ENCODE measurements at regions of chr19 and their contacts with region 1.

Region 1: GRCh38 chr19:41353466-41354342 is at the start of gene TGFB1:
- DNase-seq: peak; percentile 96
- ATAC-seq: peak; percentile 45
- H3K4me3 Mint-ChIP-seq: peak within 1 kb of the TSS; percentile 96
- H3K27ac Mint-ChIP-seq: peak within 1 kb of the TSS; percentile 97
- H3K4me1 Mint-ChIP-seq: peaks cover 58% of the 10 kb centered on the region
- H3K27me3 Mint-ChIP-seq: no peaks in the 10 kb centered on the region
- total RNA-seq, gene TGFB1: 86.2 to 99.0 TPM

Region 2: DNA sequence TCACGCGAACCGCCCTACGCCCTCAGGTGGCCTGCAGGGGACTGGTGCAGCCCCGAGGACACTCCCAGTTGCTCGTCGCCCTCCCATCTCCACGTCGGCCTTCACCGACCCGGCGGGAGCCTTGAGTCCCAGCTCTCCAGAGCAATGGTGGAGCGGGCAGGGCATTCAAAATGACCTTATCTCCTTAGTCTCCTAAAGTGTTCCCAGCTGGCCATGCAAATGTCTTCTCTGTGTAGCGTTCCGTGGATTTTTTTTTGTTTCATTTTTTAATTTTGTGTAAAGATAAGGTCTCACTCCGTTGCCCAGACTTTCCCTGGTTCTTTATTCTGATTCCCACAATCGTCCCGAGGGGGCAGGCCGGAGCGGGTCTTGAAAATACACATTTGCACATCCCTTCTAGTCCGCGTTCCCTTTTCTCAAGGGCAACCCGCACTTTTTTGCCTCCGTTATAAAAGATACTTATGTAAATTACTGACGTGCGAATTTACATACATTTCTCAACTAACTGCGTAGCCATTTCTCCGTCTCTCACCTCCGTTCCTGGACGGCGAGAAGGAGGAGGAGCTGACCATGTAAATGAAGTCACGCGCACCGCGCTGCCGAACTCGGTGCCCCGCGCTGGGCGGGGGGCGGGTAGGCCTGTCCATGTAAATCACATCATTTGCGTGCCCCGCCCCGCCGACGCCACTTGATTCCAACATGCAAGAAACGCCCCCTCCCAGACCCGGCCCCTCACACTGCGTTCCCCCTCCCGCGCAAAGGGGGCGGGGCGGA is 555.3 kb before region 1 on chr19:
- CTCF ChIA-PET with region 1: no interaction called
- POLR2A ChIA-PET with region 1: no interaction called
- intact Hi-C with region 1: loop called in 1 of 2 experiments (anchors 2 kb)
- DNase-seq: peak; percentile 100
- ATAC-seq: peak; percentile 82
- H3K4me3 Mint-ChIP-seq: peak overlapping the region; percentile 91
- H3K27ac Mint-ChIP-seq: peak overlapping the region; percentile 97
- H3K4me1 Mint-ChIP-seq: peaks cover 49% of the 10 kb centered on the region
- H3K27me3 Mint-ChIP-seq: no peaks in the 10 kb centered on the region

Region 3: DNA sequence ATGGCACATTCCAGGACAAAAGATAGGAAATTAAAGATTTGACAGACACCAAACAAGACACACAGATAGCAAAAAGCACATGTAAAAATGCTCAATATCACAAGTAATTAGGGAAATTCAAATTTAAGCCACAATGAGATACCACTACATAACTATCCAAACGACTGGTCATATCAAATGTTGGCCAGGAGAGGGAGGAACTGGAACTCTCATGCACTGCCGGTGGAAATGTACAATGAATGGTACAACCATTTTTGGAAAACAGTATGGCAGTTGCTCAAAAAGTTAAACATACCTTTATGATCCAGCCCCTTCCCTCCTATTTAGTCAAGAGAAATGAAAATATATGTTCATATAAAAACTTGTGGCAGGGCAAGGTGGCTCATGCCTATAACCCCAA is 197.5 kb before region 1 on chr19:
- CTCF ChIA-PET with region 1: no interaction called
- POLR2A ChIA-PET with region 1: no interaction called
- intact Hi-C with region 1: no loop called
- DNase-seq: no peak
- ATAC-seq: no peak
- H3K4me3 Mint-ChIP-seq: no peak overlapping the region
- H3K27ac Mint-ChIP-seq: no peak overlapping the region
- H3K4me1 Mint-ChIP-seq: no peaks in the 10 kb centered on the region
- H3K27me3 Mint-ChIP-seq: no peaks in the 10 kb centered on the region

Region 4: DNA sequence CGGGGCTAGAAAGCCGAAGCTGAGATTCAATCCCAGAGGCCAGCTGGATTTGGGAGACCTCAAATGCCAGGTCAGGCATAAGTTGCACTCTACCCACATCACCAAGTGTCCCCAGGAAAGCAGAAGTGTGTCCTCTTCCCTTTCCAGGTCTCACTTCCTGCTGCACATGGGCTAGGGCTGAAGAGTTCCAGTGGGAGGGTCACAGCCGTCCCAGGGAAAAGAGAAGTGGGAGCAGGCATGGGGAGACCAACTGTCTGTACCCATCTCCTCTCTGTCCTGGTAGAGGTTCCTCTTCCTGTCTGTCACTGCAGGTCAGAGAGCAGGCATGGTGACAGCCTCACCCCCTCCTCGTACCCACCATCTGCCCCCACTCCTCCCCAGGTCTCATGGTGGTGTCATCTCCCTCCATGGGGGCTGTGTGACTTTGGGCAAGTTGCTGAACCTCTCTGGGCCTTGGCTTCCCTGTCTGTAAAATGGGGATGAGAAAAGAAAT is 119.9 kb before region 1 on chr19:
- CTCF ChIA-PET with region 1: no interaction called
- POLR2A ChIA-PET with region 1: no interaction called
- intact Hi-C with region 1: no loop called
- DNase-seq: no peak
- ATAC-seq: no peak
- H3K4me3 Mint-ChIP-seq: no peak overlapping the region
- H3K27ac Mint-ChIP-seq: no peak overlapping the region
- H3K4me1 Mint-ChIP-seq: no peaks in the 10 kb centered on the region
- H3K27me3 Mint-ChIP-seq: no peaks in the 10 kb centered on the region

Region 5: GRCh38 chr19:41327576-41328156 is 26.0 kb before region 1 on chr19:
- CTCF ChIA-PET with region 1: interaction called, 3 read pairs
- POLR2A ChIA-PET with region 1: interaction called, 17 read pairs
- intact Hi-C with region 1: loop called (anchors 1 kb)
- DNase-seq: peak; percentile 93
- ATAC-seq: peak; percentile 75
- H3K4me3 Mint-ChIP-seq: peak overlapping the region; percentile 63
- H3K27ac Mint-ChIP-seq: peak overlapping the region; percentile 96
- H3K4me1 Mint-ChIP-seq: peaks cover 55% of the 10 kb centered on the region
- H3K27me3 Mint-ChIP-seq: no peaks in the 10 kb centered on the region

Region 6: GRCh38 chr19:41341669-41342490 is 11.8 kb before region 1 on chr19:
- CTCF ChIA-PET with region 1: no interaction called
- POLR2A ChIA-PET with region 1: no interaction called
- intact Hi-C with region 1: no loop called
- DNase-seq: no peak
- ATAC-seq: no peak
- H3K4me3 Mint-ChIP-seq: no peak overlapping the region
- H3K27ac Mint-ChIP-seq: no peak overlapping the region
- H3K4me1 Mint-ChIP-seq: peaks cover 30% of the 10 kb centered on the region
- H3K27me3 Mint-ChIP-seq: no peaks in the 10 kb centered on the region

Region 7: GRCh38 chr19:41397086-41398049 is 43.7 kb after region 1 on chr19 and contains the starts of genes BCKDHA and EXOSC5:
- CTCF ChIA-PET with region 1: no interaction called
- POLR2A ChIA-PET with region 1: no interaction called
- intact Hi-C with region 1: loop called in 1 of 2 experiments (anchors 1 kb)
- DNase-seq: peak; percentile 99
- ATAC-seq: peak; percentile 100
- H3K4me3 Mint-ChIP-seq: peak within 1 kb of the TSS; percentile 97
- H3K27ac Mint-ChIP-seq: peak within 1 kb of the TSS; percentile 97
- H3K4me1 Mint-ChIP-seq: peaks cover 31% of the 10 kb centered on the region
- H3K27me3 Mint-ChIP-seq: no peaks in the 10 kb centered on the region
- total RNA-seq, gene BCKDHA: 14.5 to 25.4 TPM
- total RNA-seq, gene EXOSC5: 32.7 to 47.8 TPM

Region 8: GRCh38 chr19:41548954-41549688 is 195.4 kb after region 1 on chr19:
- CTCF ChIA-PET with region 1: no interaction called
- POLR2A ChIA-PET with region 1: interaction called, 6 read pairs
- intact Hi-C with region 1: loop called (anchors 2 to 5 kb)
- DNase-seq: peak; percentile 89
- ATAC-seq: peak; percentile 76
- H3K4me3 Mint-ChIP-seq: peak overlapping the region; percentile 90
- H3K27ac Mint-ChIP-seq: peak overlapping the region; percentile 99
- H3K4me1 Mint-ChIP-seq: peaks cover 69% of the 10 kb centered on the region
- H3K27me3 Mint-ChIP-seq: no peaks in the 10 kb centered on the region

Region 9: DNA sequence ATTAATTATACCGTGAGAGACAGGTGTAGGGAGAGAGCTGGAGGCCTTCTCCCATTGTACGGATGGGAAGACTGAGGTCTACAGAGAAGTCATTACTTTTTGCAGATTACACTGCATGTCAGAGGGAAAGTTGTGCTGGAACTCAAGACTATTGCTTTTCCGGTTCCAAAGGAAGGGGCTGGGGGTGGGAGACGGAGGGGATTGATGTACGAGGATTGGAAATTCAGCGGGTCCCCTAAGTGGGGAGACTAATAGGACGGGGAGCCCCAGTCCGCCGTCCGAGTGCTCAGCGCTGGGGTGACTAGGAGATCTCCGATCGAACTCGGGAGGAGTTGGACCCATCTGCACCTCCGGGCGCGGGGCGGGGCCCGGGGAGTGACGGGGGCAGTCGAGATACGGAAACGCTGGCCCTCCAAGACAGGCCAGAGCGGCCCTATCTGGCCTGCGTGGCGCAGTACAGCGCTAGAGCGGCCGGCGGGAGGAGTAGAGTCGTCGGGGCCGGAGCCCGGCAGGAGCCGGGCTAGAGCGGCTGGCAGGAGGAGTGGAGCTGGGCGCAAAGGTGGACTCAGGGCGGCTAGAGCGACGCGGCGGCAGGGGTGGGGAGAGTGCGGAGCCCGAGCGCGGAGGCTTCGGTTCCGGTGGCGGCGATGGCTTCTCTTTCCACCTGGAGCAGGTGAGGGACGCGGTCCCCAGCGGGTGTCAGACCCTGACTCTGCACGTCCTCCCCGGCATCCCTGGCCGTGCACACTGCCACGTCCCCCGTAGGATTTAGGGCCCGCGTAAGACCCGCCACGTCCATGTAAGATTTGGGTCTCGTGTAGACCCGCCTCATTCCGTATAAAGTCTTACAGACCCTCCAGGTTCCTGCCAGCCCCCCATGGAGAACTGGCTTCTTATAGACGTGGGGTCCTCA is 530.4 kb after region 1 on chr19:
- CTCF ChIA-PET with region 1: no interaction called
- POLR2A ChIA-PET with region 1: no interaction called
- intact Hi-C with region 1: loop called in 1 of 2 experiments (anchors 5 kb)
- DNase-seq: peak; percentile 94
- ATAC-seq: peak; percentile 75
- H3K4me3 Mint-ChIP-seq: peak overlapping the region; percentile 68
- H3K27ac Mint-ChIP-seq: peak overlapping the region; percentile 96
- H3K4me1 Mint-ChIP-seq: peaks cover 54% of the 10 kb centered on the region
- H3K27me3 Mint-ChIP-seq: no peaks in the 10 kb centered on the region